ENCODE measurements at regions of chr10 and their contacts with region 1.

Region 1: GRCh38 chr10:133394064-133394663 is at the start of gene MTG1:
- DNase-seq: peak; percentile 87
- ATAC-seq: peak; percentile 98
- H3K4me3 ChIP-seq: peak within 1 kb of the TSS; percentile 69 to 84 (median 79)
- H3K27ac ChIP-seq: peak within 1 kb of the TSS; percentile 82
- H3K4me1 ChIP-seq: peaks cover 19% of the 10 kb centered on the region
- H3K27me3 ChIP-seq: no peaks in the 10 kb centered on the region; a peak in 1 of 5 replicates
- CTCF ChIP-seq: peak; percentile 66
- EP300 ChIP-seq: 0 out of 4 replicates have a peak, but pooled peaks of 1 of the 2 experiments have one; percentile 4
- POLR2A ChIP-seq: peak; percentile 91 to 94
- RAD21 ChIP-seq: peak; percentile 73; the same call in 1 of the 2 replicates
- total RNA-seq, gene MTG1: 29.9 and 42.0 TPM in 2 replicates

Region 2: GRCh38 chr10:133378251-133379096 is 15.7 kb before region 1 on chr10:
- CTCF ChIA-PET with region 1: no interaction called
- POLR2A ChIA-PET with region 1: interaction called, 21 read pairs
- in situ Hi-C with region 1: no loop called
- intact Hi-C with region 1: no loop called
- DNase-seq: peak; percentile 46
- ATAC-seq: peak; percentile 69
- H3K4me3 ChIP-seq: peak overlapping the region; percentile 56 to 86 (median 72)
- H3K27ac ChIP-seq: peak overlapping the region; percentile 82
- H3K4me1 ChIP-seq: peaks cover 25% of the 10 kb centered on the region
- H3K27me3 ChIP-seq: peaks cover 0 to 3% of the 10 kb centered on the region in 2 experiments; a peak in 1 of 5 replicates
- CTCF ChIP-seq: no peak
- EP300 ChIP-seq: peak in 1 of 2 experiments; percentile 52; a peak in 2 of 4 replicates
- POLR2A ChIP-seq: peak in 1 of 2 experiments; percentile 43; a peak in 1 of 4 replicates
- RAD21 ChIP-seq: no peak